ENCODE measurements at regions of chr6 and their contacts with region 1.

Region 1: DNA sequence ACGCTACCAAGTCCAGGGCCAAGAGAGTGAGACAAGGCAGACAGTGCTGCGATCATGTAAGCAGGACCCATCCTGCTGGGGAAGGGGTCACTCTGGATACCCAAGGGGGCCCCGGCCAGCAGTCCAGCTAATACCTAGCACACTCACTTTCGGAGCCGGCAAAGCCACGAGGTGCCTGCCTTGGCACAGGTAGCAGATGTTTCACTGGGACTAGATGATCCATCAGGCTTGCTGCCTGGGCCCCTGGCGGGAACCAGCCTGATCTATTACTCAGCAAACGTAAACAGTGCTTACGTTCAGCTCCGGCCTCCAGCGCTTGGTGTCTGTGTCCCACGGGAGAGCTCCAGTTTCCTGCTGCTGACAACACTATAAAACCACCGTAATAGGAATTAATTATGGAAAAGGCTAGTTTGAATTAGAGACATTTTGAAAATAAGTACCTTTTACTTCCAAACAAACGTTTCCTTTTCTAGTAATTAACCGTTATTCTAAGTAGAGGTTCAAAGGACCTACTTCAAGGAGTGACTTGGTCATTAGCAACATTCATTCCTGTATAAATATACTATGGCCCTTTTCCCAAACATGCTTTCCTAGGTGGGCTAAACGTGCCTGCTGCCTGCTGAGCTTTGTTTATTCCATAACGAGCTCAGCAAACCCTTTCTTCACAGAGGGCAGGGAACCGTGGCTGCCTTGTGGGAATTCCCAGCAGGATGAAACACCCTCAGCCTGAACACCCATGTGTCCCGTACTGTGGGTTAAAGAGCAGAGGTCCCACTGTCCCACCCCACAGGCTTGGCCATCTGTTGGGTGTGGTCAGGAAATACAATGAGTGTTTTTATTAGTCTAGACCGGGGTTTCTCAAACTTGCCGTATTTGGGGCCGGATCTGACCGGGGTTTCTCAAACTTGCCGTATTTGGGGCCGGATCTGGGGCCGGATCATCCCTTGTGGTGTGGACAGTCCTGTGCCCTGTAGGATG is 18.4 kb downstream of the SLC22A23 start:
- DNase-seq: peak in 1 of 2 donors; percentile 83
- H3K4me3 ChIP-seq: no peak overlapping the region
- CTCF ChIP-seq: no peak
- POLR2A ChIP-seq: no peak

Region 2: GRCh38 chr6:3363296-3364025 is 75.0 kb before region 1 on chr6:
- intact Hi-C with region 1: loop called (anchors 10 kb)
- DNase-seq: peak in 1 of 2 donors; percentile 62
- H3K4me3 ChIP-seq: no peak overlapping the region
- CTCF ChIP-seq: no peak
- POLR2A ChIP-seq: no peak